Endothelial cell of umbilical vein (primary cell): ENCODE measurements at regions of chr3 and their contacts with region 1.

Region 1: DNA sequence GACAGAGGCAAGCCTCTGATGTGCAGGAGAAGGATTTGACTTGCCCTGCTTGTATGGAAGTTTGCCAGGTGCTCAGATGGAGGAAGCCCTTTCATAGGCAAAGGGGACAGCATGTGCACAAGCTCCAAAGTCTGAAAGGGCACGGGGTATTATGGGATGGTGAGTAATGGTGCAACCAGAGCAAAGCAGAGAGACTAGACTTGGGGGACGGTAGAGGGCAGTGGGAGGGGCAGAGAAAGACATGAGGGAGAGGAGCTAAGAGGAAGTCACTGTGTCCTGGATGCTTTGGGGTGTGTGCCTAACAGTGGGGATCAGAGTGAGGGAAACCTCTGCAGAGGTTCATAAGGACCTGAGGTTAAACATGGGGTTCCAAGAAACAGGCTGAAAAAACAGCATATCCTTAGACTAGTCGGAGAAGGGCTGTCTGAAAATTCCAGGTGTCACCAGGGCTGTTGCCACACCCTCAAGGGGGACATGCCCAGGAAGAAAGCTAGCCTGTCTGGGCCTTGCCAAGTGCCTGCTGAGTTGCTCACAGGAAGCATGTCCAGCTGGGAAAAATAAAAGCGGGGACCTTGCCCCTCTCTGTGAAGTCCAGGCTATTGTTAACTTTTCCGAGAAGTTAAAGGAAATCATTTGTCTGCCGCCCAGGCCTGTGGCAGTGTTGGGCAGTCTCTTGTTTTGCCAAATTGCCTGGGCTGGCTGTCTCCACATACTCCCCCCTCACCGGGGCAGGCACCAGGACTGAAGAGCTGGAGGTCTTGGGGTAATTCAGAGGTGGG is 47.1 kb downstream of the HRH1 start:
- DNase-seq: peak; percentile 97
- H3K4me3 ChIP-seq: no peak overlapping the region
- H3K27ac ChIP-seq: peak overlapping the region; percentile 99
- H3K4me1 ChIP-seq: peaks cover 75% of the 10 kb centered on the region
- H3K27me3 ChIP-seq: no peaks in the 10 kb centered on the region
- CTCF ChIP-seq: peak in 1 of 2 donors; percentile 7
- POLR2A ChIP-seq: peak; percentile 75

Region 2: DNA sequence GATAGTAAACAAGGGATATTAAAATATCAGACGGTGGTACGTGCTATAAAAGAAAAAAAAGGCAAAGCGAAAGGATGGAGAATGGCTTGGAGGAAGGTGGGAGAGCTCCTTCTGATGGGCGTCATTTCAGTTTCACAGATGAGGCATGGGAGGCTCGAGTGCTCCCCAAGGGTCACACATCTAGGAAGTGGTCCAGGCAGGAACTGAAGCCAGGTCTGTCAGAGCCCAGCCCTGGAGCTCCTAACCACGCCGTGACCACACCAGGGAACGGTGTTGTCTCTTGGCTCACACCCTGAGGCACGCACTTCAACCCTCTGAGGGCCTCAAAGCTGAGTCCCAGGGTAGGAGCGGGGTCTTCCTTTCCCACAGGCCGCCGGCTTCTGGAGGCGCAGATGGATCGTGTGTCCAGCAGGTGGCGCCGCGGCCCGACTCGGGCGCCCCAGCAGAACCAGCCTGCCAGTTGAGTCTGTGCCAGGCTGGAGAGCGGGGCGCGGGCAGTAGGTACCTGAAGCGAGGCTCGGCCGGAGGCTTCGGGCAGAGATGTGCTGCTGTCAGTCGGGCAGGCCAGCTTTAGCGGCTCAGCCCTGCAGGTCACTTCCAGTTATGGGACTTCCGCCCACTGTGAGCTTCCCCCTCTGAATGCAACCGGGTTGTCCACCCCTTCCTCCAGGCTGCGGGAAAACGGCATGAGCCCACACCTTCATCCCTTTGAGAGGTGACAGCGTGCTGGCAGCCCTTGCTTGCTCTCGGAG is 140.8 kb before region 1 on chr3:
- CTCF ChIA-PET with region 1: interaction called, 31 read pairs
- POLR2A ChIA-PET with region 1: no interaction called
- dilution Hi-C with region 1: no loop called
- intact Hi-C with region 1: loop called (anchors 1 kb)
- DNase-seq: peak; percentile 54
- H3K4me3 ChIP-seq: no peak overlapping the region
- H3K27ac ChIP-seq: no peak overlapping the region
- H3K4me1 ChIP-seq: no peaks in the 10 kb centered on the region
- H3K27me3 ChIP-seq: peaks cover 2 to 4% of the 10 kb centered on the region in 2 experiments
- CTCF ChIP-seq: peak; percentile 83 to 95
- POLR2A ChIP-seq: no peak

Region 3: DNA sequence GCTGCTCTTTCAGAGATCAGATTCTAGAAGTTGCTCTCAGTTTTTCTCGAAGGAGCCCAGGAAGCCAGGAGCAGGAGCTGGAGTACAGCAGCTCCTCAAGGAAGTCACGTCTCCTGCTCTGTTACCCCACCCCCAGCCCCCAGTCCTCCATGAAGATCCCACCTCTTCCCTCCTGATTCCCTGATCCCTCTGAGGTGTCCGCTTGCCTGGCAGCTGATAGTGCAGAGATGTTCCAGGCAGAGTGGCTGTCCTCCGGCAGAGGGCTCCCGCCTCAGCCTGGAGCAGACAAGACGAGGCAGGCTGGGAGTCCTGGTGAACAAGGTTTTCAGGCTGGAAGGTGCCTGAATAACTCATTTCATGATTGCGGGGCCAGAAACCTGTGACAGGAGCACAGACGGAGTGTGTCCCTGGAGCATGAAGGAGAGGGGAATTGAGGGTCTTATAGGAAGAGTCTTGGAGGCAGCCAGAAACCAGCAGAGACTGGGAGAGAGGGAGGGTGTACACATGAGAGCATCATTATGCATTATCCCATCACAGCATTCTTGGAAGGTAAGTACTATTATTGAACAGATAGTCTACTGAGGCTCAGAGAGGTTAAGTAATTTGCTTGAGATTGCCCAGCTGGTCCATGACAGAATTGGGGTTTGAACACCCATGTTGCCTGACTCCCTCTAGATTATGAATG is 46.0 kb before region 1 on chr3:
- CTCF ChIA-PET with region 1: interaction called, 96 read pairs
- POLR2A ChIA-PET with region 1: interaction called, 3 read pairs
- dilution Hi-C with region 1: no loop called
- intact Hi-C with region 1: loop called (anchors 1 kb)
- DNase-seq: peak; percentile 84
- H3K4me3 ChIP-seq: peak overlapping the region; percentile 53 to 79 (median 78)
- H3K27ac ChIP-seq: peak overlapping the region; percentile 62
- H3K4me1 ChIP-seq: peaks cover 13% of the 10 kb centered on the region
- H3K27me3 ChIP-seq: no peaks in the 10 kb centered on the region
- CTCF ChIP-seq: peak; percentile 65 to 86
- POLR2A ChIP-seq: no peak

Region 4: DNA sequence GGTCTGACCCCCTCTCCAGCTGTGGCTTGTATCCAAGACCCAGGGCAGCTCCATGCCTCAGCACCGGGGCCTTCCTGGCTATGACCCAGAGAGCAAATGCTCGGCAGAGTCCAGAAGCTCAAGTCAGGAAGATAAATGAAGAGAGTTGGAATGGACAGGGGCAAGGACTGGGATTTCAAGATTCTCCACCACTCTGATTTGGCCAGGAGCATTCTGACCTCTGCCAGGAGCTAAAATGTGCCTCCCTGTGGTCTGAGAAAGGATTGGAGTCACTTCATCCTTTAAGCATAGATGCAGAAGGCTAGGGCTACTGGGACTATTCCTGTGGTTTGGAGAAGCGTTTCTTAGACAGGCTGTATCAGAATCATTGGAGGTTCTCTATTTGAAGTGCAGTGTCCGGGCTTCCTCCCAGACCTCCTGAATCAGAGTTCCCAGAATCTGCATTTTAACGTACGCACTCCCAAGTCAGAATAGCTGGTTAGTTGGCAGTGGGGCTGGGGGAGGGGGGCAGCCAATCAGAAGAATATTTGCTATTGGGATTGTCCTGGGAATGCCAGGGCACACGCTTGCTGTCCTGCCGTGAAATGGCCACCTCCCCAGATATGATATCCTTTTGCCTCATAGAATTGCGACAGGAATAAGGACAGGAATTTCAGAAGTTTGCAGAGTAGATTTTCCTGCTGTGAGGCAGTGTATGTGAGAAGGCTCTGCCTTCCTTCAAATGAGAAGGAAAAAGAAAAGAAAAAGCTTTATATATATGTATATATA is 10.3 kb after region 1 on chr3:
- CTCF ChIA-PET with region 1: interaction called, 14 read pairs
- POLR2A ChIA-PET with region 1: interaction called, 5 read pairs
- dilution Hi-C with region 1: no loop called
- intact Hi-C with region 1: loop called (anchors 1 kb)
- DNase-seq: peak; percentile 35
- H3K4me3 ChIP-seq: no peak overlapping the region
- H3K27ac ChIP-seq: peak overlapping the region; percentile 83
- H3K4me1 ChIP-seq: peaks cover 48% of the 10 kb centered on the region
- H3K27me3 ChIP-seq: no peaks in the 10 kb centered on the region
- CTCF ChIP-seq: peak in 1 of 2 donors; percentile 14
- POLR2A ChIP-seq: no peak

Region 5: DNA sequence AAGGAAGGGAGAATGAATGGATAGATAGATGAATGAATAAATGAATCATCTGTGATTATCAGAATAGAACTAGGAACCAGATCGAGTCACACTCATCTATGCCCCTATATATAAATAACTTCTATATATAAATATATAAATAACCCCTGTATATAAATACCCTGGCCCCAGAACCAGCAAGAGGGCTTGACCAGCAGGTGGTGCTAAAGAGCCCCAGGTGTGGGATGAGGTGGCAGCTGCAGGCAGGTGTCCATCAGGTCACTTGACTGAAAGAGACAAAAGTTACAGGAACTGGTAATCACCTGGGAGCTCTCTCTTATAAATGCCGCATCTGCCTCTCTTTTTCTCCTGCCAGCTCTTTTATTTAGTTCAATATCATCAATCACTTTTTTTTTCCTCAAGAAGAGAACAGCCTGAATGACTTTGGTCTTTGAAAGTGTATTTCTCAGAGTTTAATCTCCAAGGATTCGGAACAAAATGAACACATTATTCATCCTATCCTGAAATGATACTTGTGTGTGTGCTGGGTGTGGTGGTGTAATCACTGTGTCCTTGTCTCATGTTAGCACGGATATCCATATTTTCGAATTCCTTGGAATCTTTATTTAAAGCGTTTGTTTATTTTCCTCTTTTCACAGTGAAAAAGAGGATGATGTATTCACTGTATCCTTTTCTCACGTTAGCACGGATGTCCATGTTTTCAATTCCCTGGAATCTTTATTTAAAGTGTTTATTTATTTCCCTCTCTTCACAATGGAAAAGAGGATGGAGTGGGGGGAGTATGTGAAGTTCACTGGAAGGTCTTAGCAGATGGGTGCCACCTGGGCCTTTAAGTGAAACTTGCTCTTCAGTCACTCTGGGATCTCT is 35.4 kb after region 1 on chr3:
- CTCF ChIA-PET with region 1: interaction called, 3 read pairs
- POLR2A ChIA-PET with region 1: no interaction called
- dilution Hi-C with region 1: no loop called
- intact Hi-C with region 1: loop called (anchors 1 kb)
- DNase-seq: peak; percentile 61
- H3K4me3 ChIP-seq: no peak overlapping the region
- H3K27ac ChIP-seq: peak overlapping the region; percentile 40
- H3K4me1 ChIP-seq: peaks cover 23% of the 10 kb centered on the region
- H3K27me3 ChIP-seq: no peaks in the 10 kb centered on the region
- CTCF ChIP-seq: peak; percentile 75 to 78
- POLR2A ChIP-seq: no peak

Region 6: DNA sequence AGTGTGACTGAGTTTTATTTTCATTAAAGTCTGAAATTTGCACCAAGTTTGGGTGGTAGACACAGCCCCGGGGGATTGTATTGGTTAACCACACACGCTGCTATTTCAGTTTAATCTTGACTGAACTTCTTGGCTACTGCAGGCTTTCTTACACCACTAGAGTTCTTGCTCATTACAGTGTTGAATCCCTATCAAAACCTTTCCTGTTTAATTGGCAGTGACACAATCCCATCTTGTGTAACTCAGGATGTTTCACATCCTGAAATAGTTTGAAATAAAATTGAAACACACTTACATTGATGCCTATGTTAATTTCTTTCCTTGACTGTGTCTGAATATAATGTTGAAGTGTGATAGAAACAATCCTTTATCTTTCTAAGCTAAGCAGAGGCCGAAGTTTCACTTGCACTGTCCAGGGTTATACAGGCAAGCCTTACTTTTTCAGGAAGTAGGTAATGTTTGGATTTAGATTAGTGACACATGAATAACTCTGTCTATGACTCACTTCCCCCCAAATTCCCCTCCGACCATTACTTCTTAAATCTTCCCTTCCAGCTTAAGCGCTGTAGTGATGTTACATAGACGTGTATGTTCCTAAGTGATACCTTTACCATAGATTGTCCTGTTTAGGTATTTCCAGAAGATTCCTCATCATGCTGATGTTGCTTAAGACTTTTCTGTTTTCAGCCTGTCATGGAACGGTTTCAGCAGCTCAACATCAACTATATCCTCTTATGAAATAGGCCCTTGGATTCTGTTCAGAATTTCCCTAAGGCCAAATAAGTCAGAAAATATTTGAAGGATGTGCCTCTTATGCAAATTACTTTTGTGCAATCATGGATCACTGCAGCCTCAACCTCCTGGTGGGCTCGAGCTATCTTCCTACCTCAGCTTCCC is 87.6 kb after region 1 on chr3:
- CTCF ChIA-PET with region 1: interaction called, 4 read pairs
- POLR2A ChIA-PET with region 1: no interaction called
- dilution Hi-C with region 1: no loop called
- intact Hi-C with region 1: loop called (anchors 1 kb)
- DNase-seq: peak; percentile 95
- H3K4me3 ChIP-seq: peak overlapping the region in 1 of 3 experiments; percentile 43
- H3K27ac ChIP-seq: peak overlapping the region; percentile 98
- H3K4me1 ChIP-seq: peaks cover 50% of the 10 kb centered on the region
- H3K27me3 ChIP-seq: no peaks in the 10 kb centered on the region
- CTCF ChIP-seq: no peak
- POLR2A ChIP-seq: peak; percentile 64

Region 7: DNA sequence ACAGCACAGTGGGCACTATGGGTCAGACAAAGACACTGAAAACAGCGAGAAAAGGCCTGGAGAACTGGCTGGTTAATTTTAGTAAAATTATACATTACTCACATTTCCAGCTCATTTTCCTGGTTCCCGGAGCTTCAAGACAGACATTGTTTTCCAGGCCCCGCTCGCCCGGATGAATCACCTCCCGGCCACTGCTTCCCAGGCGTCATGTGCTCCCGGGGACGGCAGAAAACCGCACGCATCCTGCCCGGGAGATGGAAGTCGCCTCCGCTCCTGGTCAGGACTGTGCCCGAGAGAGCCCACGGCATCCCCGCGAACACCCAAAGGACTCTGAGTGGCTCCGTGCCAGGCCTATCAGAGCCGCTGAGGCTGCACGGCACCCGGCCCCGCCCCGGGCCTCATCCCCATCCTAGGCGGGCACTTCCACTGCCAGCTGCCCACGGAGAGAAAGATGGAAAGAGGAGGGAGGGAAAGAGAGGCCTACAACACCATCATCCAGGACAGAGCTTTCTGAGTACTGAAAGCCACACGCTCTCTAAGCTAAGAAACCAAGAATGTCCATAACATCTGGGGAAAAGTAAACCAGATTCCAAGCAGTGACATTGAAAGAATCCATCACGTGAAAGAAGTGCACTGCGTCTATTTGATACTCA is 367.2 kb after region 1 on chr3:
- CTCF ChIA-PET with region 1: no interaction called
- POLR2A ChIA-PET with region 1: no interaction called
- dilution Hi-C with region 1: no loop called
- intact Hi-C with region 1: loop called (anchors 10 kb)
- DNase-seq: peak; percentile 97
- H3K4me3 ChIP-seq: peak overlapping the region in 2 of 3 experiments; percentile 3 to 10
- H3K27ac ChIP-seq: peak overlapping the region; percentile 97
- H3K4me1 ChIP-seq: peaks cover 53% of the 10 kb centered on the region
- H3K27me3 ChIP-seq: no peaks in the 10 kb centered on the region
- CTCF ChIP-seq: no peak
- POLR2A ChIP-seq: peak; percentile 74